ENCODE measurements at regions of chr11 and their contacts with region 1.

Region 1: DNA sequence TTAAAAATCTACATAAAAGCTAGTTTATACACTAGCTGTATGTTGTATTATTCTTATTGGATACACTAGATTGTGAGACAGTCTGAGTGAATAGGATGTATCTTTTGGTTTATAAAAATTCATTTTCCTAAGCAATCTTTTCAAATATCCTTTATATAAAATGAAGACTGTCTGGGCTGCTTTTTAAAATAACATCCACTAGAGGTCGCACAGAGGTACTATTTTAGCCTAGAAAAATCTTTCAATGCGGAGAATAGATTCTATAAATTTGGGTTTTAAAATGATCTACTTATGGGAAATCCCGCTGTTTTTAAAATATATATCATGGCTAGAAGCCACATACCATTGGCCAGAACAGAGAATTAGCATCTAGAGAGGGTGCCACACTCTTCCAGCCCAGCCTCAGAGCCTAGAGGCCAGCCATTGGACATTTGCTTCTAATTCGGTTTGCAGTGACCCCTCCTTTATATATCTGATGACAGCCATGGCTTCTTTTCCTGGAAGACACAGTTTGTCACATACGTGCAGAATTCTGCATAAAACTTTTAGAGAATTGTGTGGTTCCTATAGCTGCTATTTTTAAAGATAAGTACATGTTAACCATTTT is 7.3 kb downstream of the C11orf97 start:
- DNase-seq: peak; percentile 59
- H3K4me3 ChIP-seq: no peak overlapping the region
- H3K27ac ChIP-seq: no peak overlapping the region
- H3K4me1 ChIP-seq: no peaks in the 10 kb centered on the region
- H3K27me3 ChIP-seq: peaks cover 12% of the 10 kb centered on the region
- CTCF ChIP-seq: peak; percentile 82

Region 2: GRCh38 chr11:94342250-94342649 is 177.3 kb before region 1 on chr11:
- CTCF ChIA-PET with region 1: no interaction called
- POLR2A ChIA-PET with region 1: interaction called, 15 read pairs
- intact Hi-C with region 1: no loop called
- DNase-seq: no peak
- H3K4me3 ChIP-seq: no peak overlapping the region
- H3K27ac ChIP-seq: no peak overlapping the region
- H3K4me1 ChIP-seq: no peaks in the 10 kb centered on the region
- H3K27me3 ChIP-seq: peaks cover 16% of the 10 kb centered on the region
- CTCF ChIP-seq: no peak

Region 3: GRCh38 chr11:94597896-94598295 is 78.3 kb after region 1 on chr11:
- CTCF ChIA-PET with region 1: interaction called, 3 read pairs
- POLR2A ChIA-PET with region 1: no interaction called
- intact Hi-C with region 1: loop called (anchors 2 kb)
- DNase-seq: peak; percentile 47
- H3K4me3 ChIP-seq: no peak overlapping the region
- H3K27ac ChIP-seq: no peak overlapping the region
- H3K4me1 ChIP-seq: peaks cover 6% of the 10 kb centered on the region
- H3K27me3 ChIP-seq: no peaks in the 10 kb centered on the region
- CTCF ChIP-seq: peak; percentile 35; the same call in 1 of the 2 replicates

Region 4: DNA sequence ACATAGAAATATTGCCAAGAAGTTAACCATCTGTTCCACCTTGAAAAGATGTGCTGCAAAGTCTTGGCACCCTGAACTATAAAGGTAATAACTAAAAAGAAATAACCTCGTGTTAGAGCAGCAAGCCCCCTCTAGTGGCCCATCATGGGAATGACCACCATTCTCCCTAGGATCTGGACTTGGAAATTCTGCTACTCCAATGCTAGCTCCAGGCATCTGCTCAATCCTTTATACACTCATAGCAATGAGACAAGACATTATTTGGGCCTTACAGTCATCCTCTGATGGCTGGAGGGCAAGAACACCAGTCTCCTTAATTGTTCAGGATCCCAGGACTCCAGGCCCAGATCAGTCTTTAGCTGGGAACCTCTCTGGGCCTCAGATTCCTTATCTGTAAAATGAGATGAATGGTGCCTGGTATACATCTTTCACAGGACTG is 377.8 kb after region 1 on chr11:
- CTCF ChIA-PET with region 1: no interaction called
- POLR2A ChIA-PET with region 1: no interaction called
- intact Hi-C with region 1: loop called (anchors 5 kb)
- DNase-seq: peak; percentile 65
- H3K4me3 ChIP-seq: no peak overlapping the region
- H3K27ac ChIP-seq: no peak overlapping the region
- H3K4me1 ChIP-seq: no peaks in the 10 kb centered on the region
- H3K27me3 ChIP-seq: no peaks in the 10 kb centered on the region
- CTCF ChIP-seq: peak; percentile 97

Region 5: DNA sequence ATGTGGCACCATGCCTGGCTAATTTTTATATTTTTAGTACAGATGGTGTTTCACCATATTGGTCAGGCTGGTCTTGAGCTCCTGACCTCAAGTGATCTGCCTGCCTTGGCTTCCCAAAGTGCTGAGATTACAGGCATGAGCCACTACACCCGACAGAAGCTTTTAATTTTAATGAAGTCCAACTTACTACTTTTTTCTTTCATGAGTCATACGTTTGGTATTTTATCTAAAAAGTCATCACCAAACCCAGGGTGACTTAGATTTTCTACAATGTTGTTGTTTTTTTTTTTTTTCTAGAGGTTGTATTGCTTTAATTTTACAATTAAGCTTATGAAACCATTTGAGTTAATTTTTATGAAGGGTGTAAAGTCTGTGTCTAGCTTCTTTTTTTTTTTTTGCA is 1905.1 kb after region 1 on chr11:
- CTCF ChIA-PET with region 1: no interaction called
- POLR2A ChIA-PET with region 1: no interaction called
- intact Hi-C with region 1: loop called (anchors 5 kb)
- DNase-seq: peak; percentile 46
- H3K4me3 ChIP-seq: no peak overlapping the region
- H3K27ac ChIP-seq: no peak overlapping the region
- H3K4me1 ChIP-seq: no peaks in the 10 kb centered on the region
- H3K27me3 ChIP-seq: no peaks in the 10 kb centered on the region
- CTCF ChIP-seq: no peak